Esophagus squamous epithelium (tissue), 5 donors: ENCODE measurements at regions of chr9 and their contacts with region 1.

Region 1: DNA sequence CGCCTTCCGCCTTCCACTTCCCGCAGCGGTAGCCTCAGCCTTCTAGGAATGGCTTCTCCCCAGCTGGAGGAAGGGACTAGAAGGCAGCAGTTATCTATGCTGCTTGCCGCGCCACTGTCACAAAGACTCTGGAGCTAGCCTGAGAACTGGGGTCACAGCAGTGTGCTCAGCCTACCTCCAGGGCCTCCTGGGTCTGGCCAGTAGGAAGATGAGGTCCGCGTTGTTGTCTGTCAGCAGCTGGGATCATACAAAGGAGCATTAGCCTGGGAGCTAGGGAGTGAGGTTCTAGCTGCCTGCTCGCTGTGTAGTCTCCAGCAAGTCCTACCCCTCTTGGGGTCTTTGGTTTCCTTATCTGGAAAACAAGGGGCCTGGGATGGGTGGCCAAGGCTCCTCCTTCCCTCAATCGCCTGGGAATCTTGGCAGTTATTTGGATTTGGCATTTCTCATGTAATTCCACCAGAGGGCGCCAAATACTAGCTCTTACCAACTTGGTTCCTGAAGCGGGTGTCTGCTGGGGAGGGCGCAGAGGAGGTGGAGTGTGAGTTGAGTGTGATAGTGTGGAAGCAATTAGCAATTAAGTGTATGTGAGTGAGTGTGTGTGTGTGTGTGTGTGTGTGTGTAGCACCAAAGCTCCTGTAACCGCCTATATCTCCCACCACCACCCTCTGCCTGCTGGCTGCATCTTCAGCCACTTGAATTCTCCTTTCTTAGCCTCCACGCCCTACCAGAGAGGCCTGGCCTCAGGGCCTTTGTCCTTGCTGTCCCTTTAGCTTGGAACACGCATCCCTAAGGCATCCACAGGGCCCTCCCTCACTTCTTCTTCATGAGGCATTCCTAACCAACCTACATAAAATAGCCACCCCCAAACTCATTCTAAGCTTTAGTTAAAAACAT is 97.1 kb downstream of the ENTREP1 start:
- DNase-seq: no peak
- H3K4me3 ChIP-seq: no peak overlapping the region
- H3K27ac ChIP-seq: no peak overlapping the region
- H3K4me1 ChIP-seq: no peaks in the 10 kb centered on the region
- H3K27me3 ChIP-seq: no peaks in the 10 kb centered on the region
- CTCF ChIP-seq: peak; percentile 36 to 87 (median 82)
- POLR2A ChIP-seq: no peak

Region 2: GRCh38 chr9:69549310-69550202 is 127.4 kb after region 1 on chr9:
- intact Hi-C with region 1: loop called (anchors 5 kb)
- DNase-seq: no peak
- H3K4me3 ChIP-seq: no peak overlapping the region
- H3K27ac ChIP-seq: no peak overlapping the region
- H3K4me1 ChIP-seq: peaks cover 0 to 4% (median 0%) of the 10 kb centered on the region in 3 donors
- H3K27me3 ChIP-seq: no peaks in the 10 kb centered on the region
- CTCF ChIP-seq: peak; percentile 15 to 88 (median 78)
- POLR2A ChIP-seq: no peak

Region 3: GRCh38 chr9:69877854-69878514 is 455.8 kb after region 1 on chr9:
- intact Hi-C with region 1: loop called (anchors 10 kb)
- DNase-seq: no peak
- H3K4me3 ChIP-seq: no peak overlapping the region
- H3K27ac ChIP-seq: no peak overlapping the region
- H3K4me1 ChIP-seq: peaks cover 0 to 4% (median 0%) of the 10 kb centered on the region in 3 donors
- H3K27me3 ChIP-seq: no peaks in the 10 kb centered on the region
- CTCF ChIP-seq: peak in 5 of 6 experiments; percentile 41 to 66 (median 50)
- POLR2A ChIP-seq: no peak